HCT116 (cell line): ENCODE measurements at regions of chr3 and their contacts with region 1.

Region 1: DNA sequence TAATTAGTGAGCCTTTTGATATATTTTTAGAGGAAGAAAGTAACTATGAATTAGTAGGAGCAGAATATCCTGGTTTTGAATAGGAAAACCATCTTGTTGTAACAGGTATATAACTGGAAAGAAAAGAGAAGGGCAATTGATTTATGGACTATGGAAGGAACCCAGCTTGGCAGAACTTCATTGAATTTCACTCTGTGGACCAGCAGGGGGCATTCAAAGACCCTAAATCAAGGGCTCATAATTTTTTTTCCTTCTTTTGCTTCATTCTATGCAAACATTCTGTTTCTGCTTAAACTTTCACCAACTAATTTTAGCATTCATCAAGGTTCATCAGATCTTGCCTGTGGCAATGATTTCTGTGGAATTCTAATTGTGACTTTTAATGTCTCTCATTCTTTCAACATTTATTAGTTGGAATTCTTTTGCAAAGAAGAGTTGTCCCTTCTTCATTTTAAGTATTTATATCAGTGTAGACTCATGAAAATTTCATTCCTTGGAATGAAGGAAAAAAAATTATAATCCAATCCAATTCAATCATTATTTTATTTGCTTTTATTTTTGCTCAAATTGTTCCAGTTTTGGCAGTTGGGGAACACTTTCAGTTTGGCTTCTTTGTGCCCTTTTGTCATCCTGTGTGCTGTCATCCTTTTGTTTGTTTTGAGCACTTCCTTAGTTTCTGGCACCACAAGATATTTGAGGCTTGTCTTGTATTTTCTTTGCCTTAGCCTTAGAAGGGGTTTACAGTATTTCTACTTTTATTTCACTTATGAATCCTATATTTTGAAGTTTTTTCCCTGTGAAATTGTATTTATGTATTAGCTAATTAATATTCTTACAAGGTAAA is 30.4 kb downstream of the NXPE3 start:
- DNase-seq: peak; percentile 28
- ATAC-seq: peak; percentile 69
- H3K4me3 ChIP-seq: no peak overlapping the region
- H3K27ac ChIP-seq: no peak overlapping the region
- H3K4me1 ChIP-seq: no peaks in the 10 kb centered on the region
- H3K27me3 ChIP-seq: no peaks in the 10 kb centered on the region
- CTCF ChIP-seq: peak; percentile 49 to 81 (median 60); a peak in 5 of 6 replicates
- POLR2A ChIP-seq: no peak
- RAD21 ChIP-seq: peak; percentile 78

Region 2: GRCh38 chr3:102536456-102536855 is 727.1 kb after region 1 on chr3:
- CTCF ChIA-PET with region 1: interaction called, 4 read pairs
- POLR2A ChIA-PET with region 1: no interaction called
- RAD21 ChIA-PET with region 1: interaction called in 1 of 2 experiments, 3 read pairs
- intact Hi-C with region 1: loop called (anchors 2 kb)
- DNase-seq: peak; percentile 26
- ATAC-seq: peak; percentile 84
- H3K4me3 ChIP-seq: no peak overlapping the region
- H3K27ac ChIP-seq: no peak overlapping the region
- H3K4me1 ChIP-seq: no peaks in the 10 kb centered on the region
- H3K27me3 ChIP-seq: no peaks in the 10 kb centered on the region
- CTCF ChIP-seq: peak; percentile 34 to 63 (median 58); a peak in 5 of 6 replicates
- POLR2A ChIP-seq: no peak
- RAD21 ChIP-seq: peak; percentile 76